Activated naive CD4-positive, alpha-beta T cell treated with anti-CD3 and anti-CD28 coated beads for 36 hours (primary cell): ENCODE measurements at regions of chr19 and their contacts with region 1.

Region 1: DNA sequence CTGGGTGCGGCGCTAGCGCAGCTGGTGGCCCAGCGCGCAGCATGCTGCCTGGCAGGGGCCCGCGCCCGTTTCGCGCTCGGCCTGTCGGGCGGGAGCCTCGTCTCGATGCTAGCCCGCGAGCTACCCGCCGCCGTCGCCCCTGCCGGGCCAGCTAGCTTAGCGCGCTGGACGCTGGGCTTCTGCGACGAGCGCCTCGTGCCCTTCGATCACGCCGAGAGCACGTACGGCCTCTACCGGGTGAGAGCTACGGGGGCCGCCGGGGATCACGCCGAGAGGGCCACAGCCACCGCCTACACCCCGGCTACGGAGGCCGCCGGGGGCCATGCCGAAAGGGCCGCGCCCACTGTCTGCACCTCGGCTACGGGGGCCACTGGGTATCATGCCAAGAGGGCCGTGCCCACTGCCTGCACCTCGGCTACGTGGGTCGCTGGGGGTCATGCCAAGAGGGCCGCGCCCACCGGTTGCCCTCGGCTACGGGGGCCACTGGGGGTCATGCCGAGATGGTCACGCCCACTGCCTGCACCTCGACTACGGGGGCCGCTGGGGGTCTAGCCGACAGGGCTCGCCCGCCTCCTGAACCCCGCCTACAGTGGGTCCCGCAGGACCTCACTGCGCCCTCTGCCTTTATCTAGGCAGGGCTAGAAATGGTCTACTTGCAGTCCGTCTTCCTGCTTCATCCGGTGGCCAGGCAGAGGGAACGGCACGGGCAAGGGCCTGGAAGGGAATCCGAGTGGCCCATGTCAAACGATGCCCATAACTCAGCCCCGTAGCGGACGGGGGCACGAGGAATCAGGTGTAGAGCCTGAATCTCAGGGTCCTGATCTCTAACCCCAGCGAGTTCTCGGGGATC is 500 bp downstream of the PGLS start:
- DNase-seq: peak; percentile 85
- H3K4me3 Mint-ChIP-seq: peak overlapping the region; percentile 93
- H3K27ac Mint-ChIP-seq: peak overlapping the region; percentile 73
- H3K4me1 Mint-ChIP-seq: peaks cover 37% of the 10 kb centered on the region
- H3K27me3 Mint-ChIP-seq: no peaks in the 10 kb centered on the region

Region 2: GRCh38 chr19:17522988-17523872 is 11.3 kb after region 1 on chr19:
- CTCF ChIA-PET with region 1: interaction called, 4 read pairs
- intact Hi-C with region 1: loop called (anchors 1 kb)
- DNase-seq: peak; percentile 83
- H3K4me3 Mint-ChIP-seq: no peak overlapping the region
- H3K27ac Mint-ChIP-seq: peak overlapping the region; percentile 85
- H3K4me1 Mint-ChIP-seq: peaks cover 15% of the 10 kb centered on the region
- H3K27me3 Mint-ChIP-seq: no peaks in the 10 kb centered on the region

Region 3: GRCh38 chr19:17539238-17540117 is 27.5 kb after region 1 on chr19:
- CTCF ChIA-PET with region 1: no interaction called
- intact Hi-C with region 1: loop called (anchors 1 kb)
- DNase-seq: peak; percentile 97
- H3K4me3 Mint-ChIP-seq: peak overlapping the region; percentile 69
- H3K27ac Mint-ChIP-seq: no peak overlapping the region
- H3K4me1 Mint-ChIP-seq: peaks cover 10% of the 10 kb centered on the region
- H3K27me3 Mint-ChIP-seq: peaks cover 6% of the 10 kb centered on the region